HepG2 (cell line): ENCODE measurements at regions of chr18 and their contacts with region 1.

Region 1: DNA sequence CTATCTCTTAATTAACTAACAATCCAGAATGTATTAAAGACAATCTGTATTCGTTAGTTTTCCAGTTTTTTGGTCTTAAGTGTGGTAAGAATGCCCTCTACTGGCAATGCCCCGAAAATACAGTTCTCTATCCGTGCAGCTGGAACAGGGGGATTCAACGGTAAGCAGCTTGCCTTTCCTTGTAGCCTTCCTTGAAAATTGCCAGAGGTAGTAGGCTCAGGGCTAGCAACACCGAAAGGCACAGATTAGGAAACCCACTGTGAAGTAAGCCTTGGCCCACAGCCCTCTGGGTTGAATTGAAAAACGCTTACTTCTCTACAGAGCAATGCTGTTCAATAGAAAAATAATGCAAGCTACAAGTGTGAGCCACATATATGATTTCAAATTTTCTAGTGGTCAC is 17.1 kb upstream of the VPS4B start:
- DNase-seq: peak; percentile 33
- ATAC-seq: peak; percentile 76
- H3K4me3 ChIP-seq: no peak overlapping the region
- H3K27ac ChIP-seq: no peak overlapping the region
- H3K4me1 ChIP-seq: no peaks in the 10 kb centered on the region
- H3K27me3 ChIP-seq: peaks cover 0 to 3% of the 10 kb centered on the region in 2 experiments; a peak in 1 of 5 replicates
- CTCF ChIP-seq: peak; percentile 83
- EP300 ChIP-seq: no peak
- POLR2A ChIP-seq: no peak
- RAD21 ChIP-seq: peak; percentile 43; the same call in 1 of the 2 replicates

Region 2: DNA sequence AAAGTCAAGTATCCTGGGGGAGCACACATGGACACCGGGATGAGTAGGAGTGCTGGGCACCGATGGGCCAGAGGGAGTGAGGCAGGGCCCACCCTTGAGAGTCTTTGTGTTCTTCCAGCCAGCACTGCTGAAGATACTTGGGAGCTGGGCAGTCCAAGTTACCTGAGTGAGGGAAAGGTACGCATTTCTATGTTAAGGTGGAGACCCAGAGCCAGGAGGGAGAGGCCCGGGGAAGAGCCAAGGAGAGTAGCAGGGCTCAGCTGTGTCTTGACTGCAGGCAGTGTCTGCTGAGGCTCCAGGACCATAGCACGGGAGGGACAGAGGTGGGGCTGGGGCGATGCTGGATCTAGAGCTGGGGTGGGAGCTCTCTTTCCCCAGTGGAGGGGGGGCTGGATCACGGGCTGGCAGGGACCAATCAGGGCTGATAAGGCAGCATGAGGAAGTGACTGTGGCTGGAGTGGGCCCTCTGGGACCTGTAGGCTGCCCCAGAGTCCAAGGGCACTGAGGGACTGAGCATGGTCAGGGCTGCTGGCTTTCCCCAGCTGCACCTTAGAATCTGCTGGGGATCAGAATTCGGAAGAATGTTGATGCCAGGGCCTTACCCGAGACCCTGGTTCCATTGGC is 434.8 kb before region 1 on chr18:
- CTCF ChIA-PET with region 1: no interaction called
- POLR2A ChIA-PET with region 1: no interaction called
- in situ Hi-C with region 1: loop called (anchors 10 kb)
- intact Hi-C with region 1: no loop called
- DNase-seq: no peak
- ATAC-seq: peak; percentile 60
- H3K4me3 ChIP-seq: no peak overlapping the region
- H3K27ac ChIP-seq: no peak overlapping the region
- H3K4me1 ChIP-seq: 0 out of 2 replicates have a peak, but pooled peaks cover 6% of the 10 kb centered on the region
- H3K27me3 ChIP-seq: peaks cover 4 to 19% of the 10 kb centered on the region in 2 experiments; a peak in 3 of 5 replicates
- CTCF ChIP-seq: no peak
- EP300 ChIP-seq: no peak
- POLR2A ChIP-seq: no peak
- RAD21 ChIP-seq: no peak

Region 3: DNA sequence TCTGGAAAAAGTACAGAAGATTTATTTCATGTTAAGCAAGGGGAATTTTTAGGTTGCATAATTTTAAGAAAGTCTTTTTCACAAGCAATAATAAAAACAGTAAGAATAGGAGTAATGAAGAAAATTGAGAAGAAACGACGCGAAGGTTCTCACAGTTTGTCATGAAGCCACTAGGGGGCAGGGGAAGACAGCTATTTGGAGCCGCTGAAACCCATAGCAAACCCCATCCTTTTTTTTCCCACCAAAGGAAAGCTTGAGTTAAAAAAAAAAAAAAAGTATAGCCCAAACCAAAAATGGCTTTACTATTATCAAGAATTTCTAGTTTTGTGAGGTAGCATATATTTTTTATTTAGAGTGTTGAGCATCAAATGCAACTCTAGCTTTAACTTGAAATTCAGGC is 423.1 kb before region 1 on chr18:
- CTCF ChIA-PET with region 1: interaction called, 9 read pairs
- POLR2A ChIA-PET with region 1: no interaction called
- in situ Hi-C with region 1: no loop called
- intact Hi-C with region 1: loop called (anchors 1 kb)
- DNase-seq: peak; percentile 36
- ATAC-seq: peak; percentile 68
- H3K4me3 ChIP-seq: no peak overlapping the region
- H3K27ac ChIP-seq: no peak overlapping the region
- H3K4me1 ChIP-seq: no peaks in the 10 kb centered on the region
- H3K27me3 ChIP-seq: peaks cover 0 to 4% of the 10 kb centered on the region in 2 experiments; a peak in 3 of 5 replicates
- CTCF ChIP-seq: peak; percentile 71
- EP300 ChIP-seq: no peak
- POLR2A ChIP-seq: no peak
- RAD21 ChIP-seq: peak; percentile 36; the same call in 1 of the 2 replicates

Region 4: GRCh38 chr18:63119647-63120046 is 319.7 kb before region 1 on chr18:
- CTCF ChIA-PET with region 1: no interaction called
- POLR2A ChIA-PET with region 1: no interaction called
- in situ Hi-C with region 1: no loop called
- intact Hi-C with region 1: loop called (anchors 2 kb)
- DNase-seq: peak; percentile 6
- ATAC-seq: peak; percentile 73
- H3K4me3 ChIP-seq: no peak overlapping the region
- H3K27ac ChIP-seq: no peak overlapping the region
- H3K4me1 ChIP-seq: no peaks in the 10 kb centered on the region
- H3K27me3 ChIP-seq: no peaks in the 10 kb centered on the region
- CTCF ChIP-seq: peak; percentile 59
- EP300 ChIP-seq: no peak
- POLR2A ChIP-seq: no peak
- RAD21 ChIP-seq: no peak

Region 5: GRCh38 chr18:63131106-63131958 is 308.0 kb before region 1 on chr18:
- CTCF ChIA-PET with region 1: interaction called, 13 read pairs
- POLR2A ChIA-PET with region 1: no interaction called
- in situ Hi-C with region 1: loop called (anchors 10 kb)
- intact Hi-C with region 1: loop called (anchors 1 kb)
- DNase-seq: peak; percentile 16
- ATAC-seq: peak; percentile 70
- H3K4me3 ChIP-seq: no peak overlapping the region
- H3K27ac ChIP-seq: no peak overlapping the region
- H3K4me1 ChIP-seq: peaks cover 10% of the 10 kb centered on the region
- H3K27me3 ChIP-seq: peaks cover 0 to 7% of the 10 kb centered on the region in 2 experiments; a peak in 2 of 5 replicates
- CTCF ChIP-seq: peak; percentile 50
- EP300 ChIP-seq: no peak
- POLR2A ChIP-seq: no peak
- RAD21 ChIP-seq: no peak

Region 6: GRCh38 chr18:63320046-63320689 is 119.2 kb before region 1 on chr18:
- CTCF ChIA-PET with region 1: no interaction called
- POLR2A ChIA-PET with region 1: no interaction called
- in situ Hi-C with region 1: no loop called
- intact Hi-C with region 1: loop called (anchors 5 kb)
- DNase-seq: peak; percentile 61
- ATAC-seq: peak; percentile 80
- H3K4me3 ChIP-seq: peak overlapping the region; percentile 56 to 80 (median 67)
- H3K27ac ChIP-seq: no peak overlapping the region
- H3K4me1 ChIP-seq: peaks cover 46% of the 10 kb centered on the region
- H3K27me3 ChIP-seq: peaks cover 0 to 26% of the 10 kb centered on the region in 2 experiments; a peak in 4 of 5 replicates
- CTCF ChIP-seq: no peak
- EP300 ChIP-seq: no peak
- POLR2A ChIP-seq: peak in 1 of 2 experiments; percentile 34; a peak in 1 of 4 replicates
- RAD21 ChIP-seq: no peak

Region 7: GRCh38 chr18:63339920-63340484 is 99.3 kb before region 1 on chr18:
- CTCF ChIA-PET with region 1: interaction called, 3 read pairs
- POLR2A ChIA-PET with region 1: no interaction called
- in situ Hi-C with region 1: loop called (anchors 10 kb)
- intact Hi-C with region 1: loop called (anchors 1 kb)
- DNase-seq: peak; percentile 22
- ATAC-seq: no peak
- H3K4me3 ChIP-seq: no peak overlapping the region
- H3K27ac ChIP-seq: no peak overlapping the region
- H3K4me1 ChIP-seq: peaks cover 25% of the 10 kb centered on the region
- H3K27me3 ChIP-seq: no peaks in the 10 kb centered on the region
- CTCF ChIP-seq: peak; percentile 44; the same call in 1 of the 2 replicates
- EP300 ChIP-seq: no peak
- POLR2A ChIP-seq: no peak
- RAD21 ChIP-seq: no peak

Region 8: DNA sequence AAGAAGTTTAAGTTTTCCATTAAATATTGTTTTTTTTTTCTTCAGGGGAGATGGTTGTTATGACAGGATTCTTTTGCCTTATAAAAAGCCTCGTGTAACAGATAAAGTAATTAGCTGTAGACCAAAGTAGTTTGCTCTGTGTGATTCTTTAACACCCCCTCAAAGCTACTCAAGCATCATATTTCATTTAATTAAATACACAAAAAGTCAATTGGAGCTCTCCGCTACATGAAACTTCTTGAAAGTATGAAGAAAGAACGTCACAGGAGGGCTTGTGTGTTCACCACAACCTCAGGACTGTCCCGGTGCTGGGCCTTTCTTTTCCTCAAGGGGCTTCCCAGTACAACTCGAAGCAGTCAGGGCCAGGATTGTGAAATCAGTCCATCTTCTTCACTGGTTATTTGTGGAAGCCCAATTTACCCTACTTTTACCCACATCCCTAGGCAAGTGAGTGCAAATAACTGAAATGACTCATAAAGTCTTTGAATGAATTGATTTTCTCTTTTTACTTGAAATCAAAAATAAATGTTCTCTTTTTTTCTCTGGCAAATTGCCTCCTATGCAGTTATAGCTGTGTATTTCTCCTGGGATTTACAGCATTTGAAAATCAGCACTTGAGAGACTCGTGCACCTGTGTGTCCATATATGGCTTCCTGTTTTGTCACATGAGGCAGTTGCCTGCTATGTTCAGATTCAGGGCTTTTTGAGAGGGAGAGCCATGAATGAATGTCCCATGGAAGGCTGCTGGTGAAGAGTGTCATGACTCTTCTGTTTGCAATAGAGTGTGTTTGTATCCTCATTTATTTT is 661.0 kb after region 1 on chr18:
- CTCF ChIA-PET with region 1: no interaction called
- POLR2A ChIA-PET with region 1: no interaction called
- in situ Hi-C with region 1: no loop called
- intact Hi-C with region 1: no loop called
- DNase-seq: no peak
- ATAC-seq: no peak
- H3K4me3 ChIP-seq: no peak overlapping the region
- H3K27ac ChIP-seq: no peak overlapping the region
- H3K4me1 ChIP-seq: no peaks in the 10 kb centered on the region
- H3K27me3 ChIP-seq: no peaks in the 10 kb centered on the region
- CTCF ChIP-seq: no peak
- EP300 ChIP-seq: no peak
- POLR2A ChIP-seq: no peak
- RAD21 ChIP-seq: no peak